Ovary (tissue), 10 donors: ENCODE measurements at regions of chr14 and their contacts with region 1.

Region 1: GRCh38 chr14:105909046-105909827 is 382.9 kb downstream of the TMEM121 start:
- DNase-seq: no peak
- H3K4me3 ChIP-seq: no peak overlapping the region
- H3K27ac ChIP-seq: no peak overlapping the region
- H3K4me1 ChIP-seq: no peaks in the 10 kb centered on the region
- H3K27me3 ChIP-seq: no peaks in the 10 kb centered on the region
- CTCF ChIP-seq: no peak
- EP300 ChIP-seq: no peak
- POLR2A ChIP-seq: no peak

Region 2: DNA sequence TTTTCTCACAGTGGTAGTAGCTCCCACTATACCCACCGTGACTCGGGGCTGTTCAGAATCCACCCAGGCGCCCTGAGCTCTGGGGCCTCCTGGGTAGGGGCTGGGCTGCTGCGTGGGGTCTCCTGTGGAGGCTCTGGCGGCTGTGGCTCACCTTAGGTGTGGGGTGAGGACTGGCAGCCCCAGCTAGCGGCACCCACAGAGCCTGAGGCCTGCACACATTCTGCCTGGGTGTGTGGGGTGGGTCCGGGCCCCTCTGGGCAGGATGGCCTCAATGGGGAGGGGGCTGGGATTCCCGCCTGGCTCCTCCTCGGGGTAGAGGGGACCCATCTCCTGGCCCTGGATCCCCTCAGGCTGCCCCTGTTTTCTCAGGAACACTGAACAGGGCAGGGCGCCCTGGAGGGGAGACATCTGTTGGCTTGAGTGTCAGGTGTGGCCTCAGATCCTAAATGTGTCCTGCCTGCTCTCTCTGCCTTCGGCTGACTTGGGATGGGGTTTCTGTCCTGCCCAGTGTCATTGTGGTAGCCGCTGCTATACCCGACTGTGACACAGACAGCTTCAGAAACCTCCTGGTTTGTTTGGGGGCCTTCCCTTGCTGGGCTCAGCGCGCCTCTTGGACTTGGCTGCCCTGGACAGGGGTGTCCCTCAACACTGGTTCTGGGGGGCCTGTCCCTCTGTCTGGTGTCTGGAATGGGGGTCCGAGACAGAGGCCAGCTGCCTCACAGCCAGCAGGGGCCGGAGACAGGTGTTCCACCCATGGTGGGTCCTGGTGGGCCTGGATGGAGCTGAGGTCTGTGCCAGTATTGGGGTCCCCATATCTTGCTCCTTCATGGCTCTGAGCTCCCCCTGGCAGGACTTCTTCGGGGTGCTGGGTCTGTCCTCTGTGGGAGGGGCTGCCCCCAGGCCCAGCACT is 28.0 kb before region 1 on chr14:
- intact Hi-C with region 1: loop called in 1 of 4 experiments (anchors 1 kb)
- DNase-seq: peak in 4 of 5 donors; percentile 4 to 14 (median 8)
- H3K4me3 ChIP-seq: no peak overlapping the region
- H3K27ac ChIP-seq: no peak overlapping the region
- H3K4me1 ChIP-seq: no peaks in the 10 kb centered on the region
- H3K27me3 ChIP-seq: no peaks in the 10 kb centered on the region
- CTCF ChIP-seq: no peak
- EP300 ChIP-seq: no peak
- POLR2A ChIP-seq: no peak